ENCODE measurements at regions of chr6 and their contacts with region 1.

Region 1: DNA sequence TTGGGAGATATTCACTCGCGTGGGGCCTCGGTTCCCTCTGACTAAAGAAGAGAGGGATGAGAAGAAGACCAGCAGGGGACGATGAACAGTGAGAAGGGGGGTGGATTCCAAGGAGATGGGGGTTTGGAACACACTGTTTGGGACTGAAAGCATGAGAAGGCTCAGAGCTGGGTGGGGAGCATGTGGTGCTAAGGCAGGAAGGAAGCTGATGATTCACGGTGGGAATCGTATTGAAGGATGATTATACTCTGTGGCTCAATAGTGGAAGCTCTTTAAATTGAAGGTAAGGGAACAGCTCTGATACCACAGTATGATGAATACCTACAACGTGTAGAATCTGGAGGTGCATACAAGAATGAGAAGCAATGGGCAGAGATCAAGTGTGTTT is 117.5 kb upstream of the KCNK16 start:
- DNase-seq: no peak

Region 2: DNA sequence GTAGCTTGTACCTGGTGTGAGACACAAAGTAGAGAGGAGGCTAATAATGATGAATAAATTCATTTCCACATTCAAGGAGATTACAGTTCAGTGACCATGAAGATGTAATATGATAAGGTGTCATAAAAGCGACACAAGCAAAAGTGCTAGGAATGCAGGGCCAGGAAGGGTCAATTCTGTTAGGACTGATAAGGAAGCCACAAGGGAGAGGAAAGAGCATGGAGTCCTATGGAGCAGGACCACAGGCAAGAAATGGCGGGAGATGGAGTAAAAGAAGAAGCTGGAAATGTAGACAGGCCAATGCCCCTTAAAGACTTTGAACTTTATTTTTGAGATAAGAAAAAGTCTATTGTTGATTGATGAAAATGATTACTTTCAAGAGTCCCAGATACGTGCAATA is 44.2 kb after region 1 on chr6:
- intact Hi-C with region 1: loop called in 1 of 2 experiments (anchors 5 kb)
- DNase-seq: no peak

Measured in posterior vena cava (tissue), 2 donors.